ENCODE measurements at regions of chr16 and their contacts with region 1.

Region 1: GRCh38 chr16:68744369-68745280 is 7.5 kb downstream of the CDH1 start:
- DNase-seq: peak; percentile 88
- ATAC-seq: peak; percentile 88
- H3K4me3 ChIP-seq: peak overlapping the region; percentile 16 to 41
- H3K27ac ChIP-seq: peak overlapping the region; percentile 68
- H3K4me1 ChIP-seq: peaks cover 72 to 82% of the 10 kb centered on the region in 2 experiments
- H3K27me3 ChIP-seq: no peaks in the 10 kb centered on the region
- CTCF ChIP-seq: no peak
- POLR2A ChIP-seq: no peak
- RAD21 ChIP-seq: peak; percentile 44; the same call in 1 of the 2 replicates

Region 2: DNA sequence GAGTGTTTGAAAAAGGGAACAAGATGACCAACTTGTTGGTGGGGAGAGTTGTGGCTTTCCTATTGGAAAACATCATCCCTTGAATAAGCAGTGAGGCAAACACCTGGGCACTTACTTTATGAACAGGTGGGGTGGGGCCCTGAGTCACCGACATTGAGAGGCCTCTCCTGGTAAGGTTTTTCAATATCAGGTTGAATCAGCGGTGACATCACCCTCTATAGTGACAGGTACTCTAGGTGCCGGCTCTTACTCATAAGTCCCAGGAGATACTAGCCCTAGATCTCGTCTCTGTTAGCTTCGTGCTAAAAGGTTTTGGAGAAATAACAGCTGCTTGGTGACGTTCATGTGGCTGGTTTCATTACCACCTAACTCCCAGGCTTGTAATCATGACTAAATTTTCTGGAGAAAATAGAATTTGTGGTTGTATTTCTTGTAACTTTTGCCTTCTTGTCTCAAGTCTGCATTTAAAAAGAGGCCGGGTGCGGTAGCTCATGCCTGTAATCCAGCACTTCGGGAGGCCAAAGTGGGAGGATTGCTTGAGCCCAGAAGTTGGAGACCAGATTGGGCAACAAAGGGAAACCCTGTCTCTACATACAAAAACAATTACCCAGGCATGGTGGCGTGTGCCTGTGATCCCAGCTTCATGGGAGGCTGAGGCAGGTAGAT is 11.8 kb after region 1 on chr16:
- CTCF ChIA-PET with region 1: no interaction called
- POLR2A ChIA-PET with region 1: no interaction called
- RAD21 ChIA-PET with region 1: no interaction called
- intact Hi-C with region 1: loop called (anchors 1 kb)
- DNase-seq: peak; percentile 98
- ATAC-seq: peak; percentile 88
- H3K4me3 ChIP-seq: peak overlapping the region in 1 of 2 experiments; percentile 24; a peak in 2 of 4 replicates
- H3K27ac ChIP-seq: peak overlapping the region; percentile 64; the same call in 1 of the 2 replicates
- H3K4me1 ChIP-seq: peaks cover 61 to 80% of the 10 kb centered on the region in 2 experiments
- H3K27me3 ChIP-seq: no peaks in the 10 kb centered on the region
- CTCF ChIP-seq: no peak
- POLR2A ChIP-seq: no peak
- RAD21 ChIP-seq: peak; percentile 33; the same call in 1 of the 2 replicates

Measured in HCT116 (cell line).